Activated B cell treated with CpG ODN at 0.5 μM for 24 hours (primary cell): ENCODE measurements at regions of chr15 and their contacts with region 1.

Region 1: DNA sequence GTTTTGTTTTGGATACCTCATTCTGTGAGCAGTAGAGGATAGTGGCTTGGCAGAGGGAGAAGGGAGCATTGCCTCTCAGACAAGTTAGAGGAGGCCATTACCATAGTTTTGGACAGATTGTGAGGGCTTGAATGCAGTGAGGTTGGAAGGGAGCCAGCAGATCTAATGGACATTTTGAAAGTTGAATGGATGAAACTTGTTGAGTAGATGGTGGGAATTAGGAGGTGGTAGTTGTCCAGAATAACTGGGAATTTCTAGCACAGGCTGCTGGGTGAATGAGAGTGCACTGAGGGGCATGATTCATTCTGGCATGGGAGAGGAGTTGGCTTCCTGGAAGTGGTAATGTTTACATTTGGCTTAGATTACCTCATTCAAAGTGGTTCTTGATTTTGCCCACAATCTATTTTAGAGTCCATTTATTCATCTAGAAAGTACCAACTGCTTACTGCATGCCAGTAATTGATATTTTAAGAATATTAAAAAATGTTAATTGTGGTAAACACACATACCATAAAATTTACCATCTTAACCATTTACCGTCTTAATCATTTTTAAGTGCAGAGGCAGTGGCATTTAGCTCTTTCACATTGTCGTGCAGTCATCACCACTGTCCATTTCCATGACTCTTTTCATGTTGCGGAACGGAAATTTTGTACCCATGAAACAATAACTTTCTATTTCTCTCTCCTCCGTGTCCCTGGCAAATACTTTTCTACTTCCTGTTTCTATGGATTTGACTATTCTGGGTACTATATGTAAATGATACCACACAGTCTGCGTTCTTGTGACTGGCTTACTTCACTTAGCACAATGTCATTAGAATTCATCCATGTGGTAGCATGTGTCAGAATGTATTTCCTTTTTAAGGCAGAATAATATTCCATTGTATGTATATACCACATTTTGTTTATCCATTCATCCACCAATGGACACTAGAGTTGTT is 27.7 kb downstream of the AKAP13 start:
- DNase-seq: no peak
- ATAC-seq: peak; percentile 68
- H3K4me3 Mint-ChIP-seq: peak overlapping the region; percentile 70
- H3K27ac Mint-ChIP-seq: peak overlapping the region; percentile 95
- H3K4me1 Mint-ChIP-seq: peaks cover 88% of the 10 kb centered on the region
- H3K27me3 Mint-ChIP-seq: no peaks in the 10 kb centered on the region
- CTCF ChIP-seq: no peak

Region 2: DNA sequence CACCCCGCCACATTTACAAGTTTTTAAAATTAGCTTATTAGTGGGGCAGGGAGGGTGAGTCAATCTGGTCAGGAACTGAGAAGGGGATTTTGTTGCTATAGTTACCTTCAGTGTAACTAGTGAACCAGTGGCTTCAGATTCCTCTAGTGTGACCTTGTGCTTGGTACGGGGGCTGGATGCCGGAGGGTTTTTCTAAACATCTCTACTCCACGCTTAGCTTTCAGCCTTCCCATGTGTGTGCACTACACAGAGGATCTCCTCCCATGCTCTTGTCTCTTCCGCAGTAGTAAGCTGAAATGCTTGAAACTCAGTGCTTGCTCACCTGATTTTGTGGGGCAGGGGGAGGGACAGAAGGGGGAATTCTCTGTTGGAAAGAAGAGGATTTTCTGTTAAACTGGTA is 95.6 kb before region 1 on chr15:
- CTCF ChIA-PET with region 1: interaction called, 50 read pairs
- POLR2A ChIA-PET with region 1: interaction called, 39 read pairs
- intact Hi-C with region 1: loop called (anchors 1 kb)
- DNase-seq: peak; percentile 53
- ATAC-seq: peak; percentile 89
- H3K4me3 Mint-ChIP-seq: peak overlapping the region; percentile 87
- H3K27ac Mint-ChIP-seq: peak overlapping the region; percentile 99
- H3K4me1 Mint-ChIP-seq: peaks cover 96% of the 10 kb centered on the region
- H3K27me3 Mint-ChIP-seq: no peaks in the 10 kb centered on the region
- CTCF ChIP-seq: no peak

Region 3: GRCh38 chr15:85318048-85318731 is 89.9 kb before region 1 on chr15:
- CTCF ChIA-PET with region 1: interaction called, 50 read pairs
- POLR2A ChIA-PET with region 1: interaction called, 39 read pairs
- intact Hi-C with region 1: loop called (anchors 1 kb)
- DNase-seq: no peak
- ATAC-seq: peak; percentile 87
- H3K4me3 Mint-ChIP-seq: peak overlapping the region; percentile 69
- H3K27ac Mint-ChIP-seq: peak overlapping the region; percentile 87
- H3K4me1 Mint-ChIP-seq: peaks cover 74% of the 10 kb centered on the region
- H3K27me3 Mint-ChIP-seq: no peaks in the 10 kb centered on the region
- CTCF ChIP-seq: no peak

Region 4: DNA sequence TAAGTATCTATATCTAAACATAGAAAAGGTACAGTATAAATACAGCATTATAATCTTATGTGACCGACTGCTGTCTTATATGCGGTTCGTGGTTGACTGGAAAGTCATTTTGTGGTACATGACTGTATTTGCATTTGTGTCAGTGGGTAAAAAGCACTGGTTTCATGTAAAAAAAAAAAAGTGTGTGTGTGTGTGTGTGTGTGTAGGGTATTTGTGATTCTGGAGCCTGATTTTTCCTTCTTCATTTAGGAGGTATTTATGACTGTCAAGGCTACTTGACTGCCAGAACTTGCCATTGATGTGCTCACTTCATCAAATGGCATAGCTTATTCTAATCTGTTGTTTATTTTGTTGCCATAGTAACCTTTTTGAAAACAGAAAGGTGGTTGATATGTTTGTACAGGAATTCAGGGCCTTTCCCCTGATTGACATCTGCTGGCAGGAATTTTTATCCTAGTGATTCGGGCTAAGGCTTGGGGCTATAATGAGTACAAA is 35.6 kb after region 1 on chr15:
- CTCF ChIA-PET with region 1: no interaction called
- POLR2A ChIA-PET with region 1: interaction called, 10 read pairs
- intact Hi-C with region 1: loop called (anchors 1 kb)
- DNase-seq: no peak
- ATAC-seq: peak; percentile 73
- H3K4me3 Mint-ChIP-seq: peak overlapping the region; percentile 50
- H3K27ac Mint-ChIP-seq: peak overlapping the region; percentile 77
- H3K4me1 Mint-ChIP-seq: peaks cover 72% of the 10 kb centered on the region
- H3K27me3 Mint-ChIP-seq: no peaks in the 10 kb centered on the region
- CTCF ChIP-seq: no peak

Region 5: DNA sequence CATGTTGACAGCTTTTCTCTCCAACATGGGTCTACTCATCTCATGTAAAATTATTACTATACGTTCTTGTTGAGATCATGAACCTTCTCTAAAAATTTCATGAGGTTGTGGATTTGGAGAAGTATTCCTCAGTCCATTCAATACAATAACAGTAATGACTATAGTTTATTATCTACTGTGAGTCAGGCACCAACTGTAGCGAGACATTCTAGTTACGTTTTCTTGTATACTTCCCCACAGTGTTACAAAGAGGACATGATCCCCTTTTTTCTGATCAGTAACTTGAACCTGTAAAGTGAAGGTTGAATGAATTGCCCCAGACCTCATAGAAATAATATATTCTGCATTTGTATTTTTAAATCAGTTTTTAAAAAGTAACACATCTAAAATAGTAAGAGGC is 48.7 kb after region 1 on chr15:
- CTCF ChIA-PET with region 1: interaction called, 3 read pairs
- POLR2A ChIA-PET with region 1: interaction called, 10 read pairs
- intact Hi-C with region 1: loop called (anchors 1 kb)
- DNase-seq: no peak
- ATAC-seq: peak; percentile 69
- H3K4me3 Mint-ChIP-seq: no peak overlapping the region
- H3K27ac Mint-ChIP-seq: peak overlapping the region; percentile 88
- H3K4me1 Mint-ChIP-seq: peaks cover 90% of the 10 kb centered on the region
- H3K27me3 Mint-ChIP-seq: no peaks in the 10 kb centered on the region
- CTCF ChIP-seq: no peak

Region 6: DNA sequence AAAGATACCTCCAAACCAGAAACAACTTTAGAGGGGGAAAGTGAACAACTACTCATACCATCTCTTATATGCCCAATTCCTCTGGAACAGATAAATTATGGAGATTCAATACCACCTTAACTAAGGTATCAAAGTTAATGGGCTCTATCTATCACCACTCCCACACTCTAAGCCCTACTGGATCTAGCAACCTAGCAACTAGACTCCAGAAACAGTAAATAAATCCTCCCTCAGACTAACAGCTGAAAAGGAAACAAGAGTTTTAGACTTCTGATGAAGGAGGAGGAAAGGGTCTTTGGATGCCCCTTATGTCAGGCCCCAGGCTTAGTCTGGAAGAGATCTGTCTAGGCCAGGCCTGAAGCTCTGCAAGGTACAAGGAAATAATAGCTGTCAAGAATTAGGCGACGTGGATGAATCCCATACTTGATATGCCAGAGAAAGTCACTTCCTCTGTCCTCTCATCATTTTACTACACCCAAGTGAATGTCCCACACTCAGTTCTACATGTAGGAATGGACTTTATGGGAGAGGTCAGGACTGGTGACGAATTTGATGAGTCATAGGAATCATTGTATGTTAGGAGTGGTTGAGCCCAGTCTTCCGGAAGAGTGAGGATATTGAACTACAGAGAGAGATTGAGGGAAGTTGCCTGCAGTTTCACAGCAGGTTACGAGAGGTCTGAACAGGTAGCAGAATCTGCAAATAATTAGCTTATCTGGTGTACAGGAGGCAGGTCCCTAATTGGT is 86.1 kb after region 1 on chr15:
- CTCF ChIA-PET with region 1: no interaction called
- POLR2A ChIA-PET with region 1: no interaction called
- intact Hi-C with region 1: no loop called
- DNase-seq: no peak
- ATAC-seq: peak; percentile 37
- H3K4me3 Mint-ChIP-seq: no peak overlapping the region
- H3K27ac Mint-ChIP-seq: no peak overlapping the region
- H3K4me1 Mint-ChIP-seq: peaks cover 81% of the 10 kb centered on the region
- H3K27me3 Mint-ChIP-seq: no peaks in the 10 kb centered on the region
- CTCF ChIP-seq: no peak

Region 7: GRCh38 chr15:85702321-85703101 is 294.4 kb after region 1 on chr15:
- CTCF ChIA-PET with region 1: no interaction called
- POLR2A ChIA-PET with region 1: no interaction called
- intact Hi-C with region 1: loop called (anchors 5 kb)
- DNase-seq: no peak
- ATAC-seq: no peak
- H3K4me3 Mint-ChIP-seq: peak overlapping the region; percentile 61
- H3K27ac Mint-ChIP-seq: peak overlapping the region; percentile 89
- H3K4me1 Mint-ChIP-seq: peaks cover 76% of the 10 kb centered on the region
- H3K27me3 Mint-ChIP-seq: no peaks in the 10 kb centered on the region
- CTCF ChIP-seq: no peak